ENCODE measurements at regions of chr3 and their contacts with region 1.

Region 1: GRCh38 chr3:194952841-194953241 is 267.2 kb downstream of the FAM43A start:
- DNase-seq: peak; percentile 47 to 68
- H3K4me3 ChIP-seq: no peak overlapping the region
- H3K4me3 Mint-ChIP-seq: no peak overlapping the region
- H3K27ac Mint-ChIP-seq: peak overlapping the region; percentile 3
- H3K4me1 ChIP-seq: peaks cover 21% of the 10 kb centered on the region
- H3K4me1 Mint-ChIP-seq: peaks cover 11% of the 10 kb centered on the region
- H3K27me3 ChIP-seq: no peaks in the 10 kb centered on the region
- H3K27me3 Mint-ChIP-seq: no peaks in the 10 kb centered on the region
- CTCF ChIP-seq: no peak

Region 2: DNA sequence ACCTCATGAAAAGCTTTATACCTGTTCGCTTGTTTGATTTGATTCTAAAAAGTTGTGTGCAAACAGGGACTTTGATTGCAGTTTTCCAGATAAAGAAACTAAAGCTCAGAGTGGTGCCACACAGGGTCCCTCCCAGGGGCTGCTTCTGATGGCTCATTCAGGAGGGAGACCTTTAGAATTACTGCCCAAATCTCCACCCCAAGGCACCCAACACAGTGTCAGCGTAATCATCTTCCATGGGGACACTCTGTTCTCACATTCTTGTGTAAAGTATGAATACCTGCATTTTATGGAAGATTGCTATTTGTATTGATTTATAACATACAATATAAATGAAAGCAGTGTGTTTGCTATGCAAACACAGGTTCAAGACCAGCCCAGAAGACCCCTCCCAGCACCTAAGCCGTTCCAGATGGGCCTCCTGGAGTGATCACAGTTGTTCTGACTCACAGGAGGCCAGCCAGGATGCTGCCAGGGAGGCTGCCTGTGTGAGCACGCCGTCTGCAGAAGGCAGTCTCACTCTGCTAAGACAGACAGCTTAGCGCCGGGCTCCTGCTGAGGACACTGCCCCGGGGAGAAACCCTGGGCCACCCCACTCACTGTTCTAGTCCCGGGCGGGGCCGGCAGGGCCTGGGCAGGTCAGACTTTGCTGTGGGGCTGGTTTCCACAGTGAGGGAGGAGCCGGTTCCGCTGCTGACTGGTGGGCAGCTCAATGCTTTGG is 81.5 kb before region 1 on chr3:
- CTCF ChIA-PET with region 1: no interaction called
- POLR2A ChIA-PET with region 1: no interaction called
- intact Hi-C with region 1: loop called (anchors 2 kb)
- DNase-seq: peak; percentile 72 to 82
- H3K4me3 ChIP-seq: no peak overlapping the region
- H3K4me3 Mint-ChIP-seq: no peak overlapping the region
- H3K27ac Mint-ChIP-seq: no peak overlapping the region
- H3K4me1 ChIP-seq: peaks cover 28% of the 10 kb centered on the region
- H3K4me1 Mint-ChIP-seq: peaks cover 19% of the 10 kb centered on the region
- H3K27me3 ChIP-seq: no peaks in the 10 kb centered on the region
- H3K27me3 Mint-ChIP-seq: no peaks in the 10 kb centered on the region
- CTCF ChIP-seq: no peak